Common myeloid progenitor, CD34-positive (primary cell): ENCODE measurements at regions of chr9 and their contacts with region 1.

Region 1: GRCh38 chr9:121686930-121687541 is 35.6 kb downstream of the DAB2IP start:
- DNase-seq: peak; percentile 75 to 88 (median 81)
- H3K4me3 ChIP-seq: no peak overlapping the region
- H3K27ac ChIP-seq: no peak overlapping the region
- H3K4me1 ChIP-seq: peaks cover 0 to 4% (median 0%) of the 10 kb centered on the region in 4 experiments
- H3K27me3 ChIP-seq: peaks cover 0 to 2% (median 0%) of the 10 kb centered on the region in 5 experiments

Region 2: GRCh38 chr9:121609845-121610570 is 77.0 kb before region 1 on chr9:
- CTCF ChIA-PET with region 1: interaction called, 11 read pairs
- POLR2A ChIA-PET with region 1: no interaction called
- DNase-seq: no peak
- H3K4me3 ChIP-seq: no peak overlapping the region
- H3K27ac ChIP-seq: no peak overlapping the region
- H3K4me1 ChIP-seq: peaks cover 8 to 25% (median 20%) of the 10 kb centered on the region in 4 experiments
- H3K27me3 ChIP-seq: peaks cover 0 to 16% (median 5%) of the 10 kb centered on the region in 5 experiments

Region 3: GRCh38 chr9:121640076-121640475 is 47.0 kb before region 1 on chr9:
- CTCF ChIA-PET with region 1: interaction called, 154 read pairs
- POLR2A ChIA-PET with region 1: no interaction called
- DNase-seq: peak in 2 of 3 donors; percentile 59 to 62
- H3K4me3 ChIP-seq: no peak overlapping the region
- H3K27ac ChIP-seq: no peak overlapping the region
- H3K4me1 ChIP-seq: peaks cover 0 to 39% (median 35%) of the 10 kb centered on the region in 4 experiments
- H3K27me3 ChIP-seq: no peaks in the 10 kb centered on the region

Region 4: DNA sequence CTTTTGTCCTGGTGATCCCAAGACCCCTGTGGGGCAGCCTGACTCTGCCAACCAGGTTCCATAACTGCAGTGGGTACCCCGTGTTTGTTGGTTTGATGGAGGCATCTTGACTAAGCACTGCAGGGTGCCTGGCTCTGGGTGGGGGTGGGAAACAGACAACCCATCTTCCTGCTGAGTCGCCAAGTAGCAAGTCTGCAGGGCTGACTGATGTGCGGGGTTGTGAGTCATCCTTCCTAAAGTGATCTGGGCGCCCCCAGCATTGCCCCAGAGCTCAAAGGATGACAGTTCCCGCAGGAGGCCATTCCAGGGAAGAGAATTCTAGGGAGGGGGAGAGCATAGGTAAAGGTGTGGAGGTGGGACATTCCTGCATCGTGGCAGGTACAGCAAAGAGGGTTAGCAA is 12.1 kb before region 1 on chr9:
- CTCF ChIA-PET with region 1: interaction called, 134 read pairs
- POLR2A ChIA-PET with region 1: no interaction called
- DNase-seq: peak in 1 of 3 donors; percentile 19
- H3K4me3 ChIP-seq: no peak overlapping the region
- H3K27ac ChIP-seq: no peak overlapping the region
- H3K4me1 ChIP-seq: peaks cover 0 to 6% (median 0%) of the 10 kb centered on the region in 4 experiments
- H3K27me3 ChIP-seq: peaks cover 0 to 2% (median 0%) of the 10 kb centered on the region in 5 experiments

Region 5: GRCh38 chr9:121735065-121735789 is 48.2 kb after region 1 on chr9:
- CTCF ChIA-PET with region 1: interaction called, 10 read pairs
- POLR2A ChIA-PET with region 1: no interaction called
- DNase-seq: peak; percentile 43 to 73 (median 72)
- H3K4me3 ChIP-seq: no peak overlapping the region
- H3K27ac ChIP-seq: no peak overlapping the region
- H3K4me1 ChIP-seq: peaks cover 0 to 13% (median 12%) of the 10 kb centered on the region in 4 experiments
- H3K27me3 ChIP-seq: peaks cover 0 to 40% (median 15%) of the 10 kb centered on the region in 5 experiments

Region 6: GRCh38 chr9:121759996-121760395 is 73.0 kb after region 1 on chr9:
- CTCF ChIA-PET with region 1: no interaction called
- POLR2A ChIA-PET with region 1: no interaction called
- DNase-seq: no peak
- H3K4me3 ChIP-seq: no peak overlapping the region
- H3K27ac ChIP-seq: no peak overlapping the region
- H3K4me1 ChIP-seq: no peaks in the 10 kb centered on the region
- H3K27me3 ChIP-seq: peaks cover 0 to 2% (median 0%) of the 10 kb centered on the region in 5 experiments

Region 7: GRCh38 chr9:121997791-121998190 is 310.8 kb after region 1 on chr9:
- CTCF ChIA-PET with region 1: interaction called, 19 read pairs
- POLR2A ChIA-PET with region 1: no interaction called
- DNase-seq: no peak
- H3K4me3 ChIP-seq: no peak overlapping the region
- H3K27ac ChIP-seq: no peak overlapping the region
- H3K4me1 ChIP-seq: peaks cover 0 to 3% (median 0%) of the 10 kb centered on the region in 4 experiments
- H3K27me3 ChIP-seq: no peaks in the 10 kb centered on the region